RWPE1 (cell line): ENCODE measurements at regions of chr2 and their contacts with region 1.

Region 1: DNA sequence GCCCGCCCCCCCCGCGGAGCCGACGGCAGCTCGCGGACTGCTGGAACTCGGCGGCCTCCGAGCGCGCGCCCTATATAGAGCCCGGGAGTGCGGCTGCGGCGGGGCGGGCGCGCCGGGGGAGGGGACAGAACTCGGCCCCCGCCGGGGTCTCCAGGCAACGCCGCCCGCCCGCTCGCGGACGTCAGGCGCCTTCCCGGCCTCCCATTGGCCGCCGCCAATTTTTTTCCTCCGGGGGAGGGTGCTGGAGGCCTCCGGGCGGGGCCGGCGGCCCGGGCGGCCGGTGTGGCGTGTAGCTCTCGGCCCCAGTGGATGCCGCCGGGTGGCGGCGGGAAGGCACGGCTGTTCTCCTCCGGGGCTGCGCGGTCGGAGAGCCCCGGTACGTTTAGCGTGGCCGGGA is at the start of gene ZFP36L2:
- DNase-seq: peak; percentile 98
- H3K27ac ChIP-seq: peak within 1 kb of the TSS; percentile 99
- CTCF ChIP-seq: no peak

Region 2: GRCh38 chr2:42828487-42829425 is 397.8 kb before region 1 on chr2:
- CTCF ChIA-PET with region 1: interaction called, 13 read pairs
- POLR2A ChIA-PET with region 1: no interaction called
- DNase-seq: peak; percentile 88
- H3K27ac ChIP-seq: peak overlapping the region; percentile 72
- CTCF ChIP-seq: peak; percentile 90

Region 3: GRCh38 chr2:42944779-42945415 is 281.7 kb before region 1 on chr2:
- CTCF ChIA-PET with region 1: interaction called, 17 read pairs
- POLR2A ChIA-PET with region 1: interaction called, 3 read pairs
- DNase-seq: no peak
- H3K27ac ChIP-seq: peak overlapping the region; percentile 26; the same call in 1 of the 2 replicates
- CTCF ChIP-seq: no peak

Region 4: GRCh38 chr2:42974721-42975717 is 251.5 kb before region 1 on chr2:
- CTCF ChIA-PET with region 1: interaction called, 29 read pairs
- POLR2A ChIA-PET with region 1: interaction called, 5 read pairs
- DNase-seq: peak; percentile 55
- H3K27ac ChIP-seq: peak overlapping the region; percentile 81
- CTCF ChIP-seq: peak; percentile 88

Region 5: DNA sequence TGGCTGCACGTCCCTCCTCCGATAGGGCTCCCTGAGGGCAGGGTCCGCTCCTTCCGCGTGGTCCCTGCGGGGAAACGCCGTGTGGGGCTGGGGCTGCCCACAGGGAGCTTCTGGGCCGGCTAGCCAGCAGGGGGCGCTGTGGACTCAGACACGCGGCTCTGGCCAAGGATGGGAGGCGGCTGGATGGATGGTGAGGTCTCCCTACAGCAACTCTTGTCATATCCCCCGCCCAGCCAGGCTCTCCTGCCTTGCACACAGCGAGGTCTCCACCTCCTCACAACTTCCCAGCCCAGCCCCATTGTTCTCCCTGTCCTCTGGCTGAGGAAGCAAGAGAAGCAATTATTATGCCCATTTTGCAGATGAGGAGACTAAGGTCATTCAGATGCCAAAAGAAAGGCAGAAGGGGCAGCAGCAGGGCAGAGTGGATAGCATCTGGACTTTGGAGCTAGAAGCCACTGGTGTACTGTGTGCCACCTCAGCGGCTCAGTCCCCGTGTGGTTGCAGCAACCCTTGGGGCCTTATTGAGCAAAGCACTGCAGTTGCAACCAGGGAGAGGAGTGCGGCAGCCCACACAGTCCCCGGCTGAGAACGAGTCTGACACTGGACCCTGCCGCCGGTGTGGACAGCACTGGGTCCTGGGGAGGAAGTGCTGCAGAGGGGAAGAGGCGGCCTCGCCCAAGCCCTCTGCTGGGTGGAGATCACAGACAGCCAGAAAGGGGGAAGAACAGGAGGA is 99.2 kb before region 1 on chr2:
- CTCF ChIA-PET with region 1: interaction called, 10 read pairs
- POLR2A ChIA-PET with region 1: interaction called, 3 read pairs
- DNase-seq: no peak
- H3K27ac ChIP-seq: peak overlapping the region; percentile 98
- CTCF ChIP-seq: peak; percentile 58

Region 6: DNA sequence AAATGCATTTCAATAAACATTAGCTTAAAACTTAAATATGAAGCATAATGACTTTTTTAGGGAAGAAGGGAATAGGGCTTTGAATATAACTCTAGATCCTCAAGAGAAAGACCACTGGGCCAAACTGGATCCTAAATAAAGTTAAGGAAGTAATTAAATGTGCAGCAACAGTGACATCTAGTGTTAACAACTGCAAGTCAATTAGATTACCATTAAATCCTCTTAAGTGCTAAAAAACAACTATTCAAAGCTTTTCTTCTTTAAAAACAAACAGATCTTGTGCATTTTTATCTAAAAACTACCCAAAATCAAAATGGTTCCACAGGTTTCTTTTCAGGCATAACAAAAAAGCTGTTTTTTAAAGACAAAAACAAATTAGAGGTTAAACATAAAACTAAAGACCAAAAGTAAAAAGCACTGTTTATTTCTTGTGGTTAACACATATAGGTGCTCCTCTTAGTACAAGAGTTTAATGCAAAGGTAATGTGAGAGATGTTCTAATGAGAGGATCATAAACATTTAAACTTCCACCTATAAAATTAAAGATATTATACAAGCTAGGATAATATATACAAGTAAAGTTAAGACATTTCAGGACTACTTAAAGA is 257.9 kb after region 1 on chr2:
- CTCF ChIA-PET with region 1: interaction called, 13 read pairs
- POLR2A ChIA-PET with region 1: interaction called, 6 read pairs
- DNase-seq: peak; percentile 27
- H3K27ac ChIP-seq: no peak overlapping the region
- CTCF ChIP-seq: peak; percentile 70